IMR-90 (cell line): ENCODE measurements at regions of chr1 and their contacts with region 1.

Region 1: GRCh38 chr1:84620720-84621313 is 46.6 kb upstream of the CTBS start:
- DNase-seq: peak; percentile 57
- ATAC-seq: peak; percentile 93
- H3K4me3 ChIP-seq: peak overlapping the region; percentile 72
- H3K27ac ChIP-seq: peak overlapping the region; percentile 77
- H3K4me1 ChIP-seq: peaks cover 6% of the 10 kb centered on the region
- H3K27me3 ChIP-seq: no peaks in the 10 kb centered on the region
- CTCF ChIP-seq: peak; percentile 63
- POLR2A ChIP-seq: no peak
- RAD21 ChIP-seq: peak; percentile 49

Region 2: GRCh38 chr1:83905315-83905907 is 715.4 kb before region 1 on chr1:
- CTCF ChIA-PET with region 1: no interaction called
- POLR2A ChIA-PET with region 1: interaction called, 3 read pairs
- dilution Hi-C with region 1: no loop called
- in situ Hi-C with region 1: no loop called
- intact Hi-C with region 1: loop called (anchors 10 kb)
- DNase-seq: peak; percentile 22
- ATAC-seq: no peak
- H3K4me3 ChIP-seq: no peak overlapping the region
- H3K27ac ChIP-seq: no peak overlapping the region
- H3K4me1 ChIP-seq: peaks cover 2% of the 10 kb centered on the region; the same call in 1 of the 2 replicates
- H3K27me3 ChIP-seq: no peaks in the 10 kb centered on the region
- CTCF ChIP-seq: peak; percentile 60
- POLR2A ChIP-seq: no peak
- RAD21 ChIP-seq: peak; percentile 48; the same call in 1 of the 2 replicates

Region 3: GRCh38 chr1:84442256-84442655 is 178.6 kb before region 1 on chr1:
- CTCF ChIA-PET with region 1: interaction called, 3 read pairs
- POLR2A ChIA-PET with region 1: no interaction called
- dilution Hi-C with region 1: no loop called
- in situ Hi-C with region 1: no loop called
- intact Hi-C with region 1: loop called (anchors 1 kb)
- DNase-seq: peak; percentile 94
- ATAC-seq: peak; percentile 96
- H3K4me3 ChIP-seq: no peak overlapping the region
- H3K27ac ChIP-seq: no peak overlapping the region
- H3K4me1 ChIP-seq: 0 out of 2 replicates have a peak, but pooled peaks cover 2% of the 10 kb centered on the region
- H3K27me3 ChIP-seq: no peaks in the 10 kb centered on the region
- CTCF ChIP-seq: peak; percentile 82
- POLR2A ChIP-seq: no peak
- RAD21 ChIP-seq: peak; percentile 89

Region 4: GRCh38 chr1:84506002-84506728 is 114.7 kb before region 1 on chr1 and contains the starts of genes GNG5 and SPATA1:
- CTCF ChIA-PET with region 1: no interaction called
- POLR2A ChIA-PET with region 1: no interaction called
- dilution Hi-C with region 1: no loop called
- in situ Hi-C with region 1: no loop called
- intact Hi-C with region 1: loop called (anchors 1 kb)
- DNase-seq: peak; percentile 95
- ATAC-seq: peak; percentile 94
- H3K4me3 ChIP-seq: peak within 1 kb of the TSS; percentile 92
- H3K27ac ChIP-seq: peak within 1 kb of the TSS; percentile 95
- H3K4me1 ChIP-seq: peaks cover 6% of the 10 kb centered on the region; the same call in 1 of the 2 replicates
- H3K27me3 ChIP-seq: no peaks in the 10 kb centered on the region
- CTCF ChIP-seq: 0 out of 2 replicates have a peak, but pooled peaks have one; percentile 1
- POLR2A ChIP-seq: peak; percentile 95
- RAD21 ChIP-seq: peak; percentile 0; the same call in 1 of the 2 replicates
- total RNA-seq, gene GNG5: 30.8 and 36.4 TPM in 2 replicates
- total RNA-seq, gene SPATA1: under 0.01 and 0.56 TPM in 2 replicates

Region 5: DNA sequence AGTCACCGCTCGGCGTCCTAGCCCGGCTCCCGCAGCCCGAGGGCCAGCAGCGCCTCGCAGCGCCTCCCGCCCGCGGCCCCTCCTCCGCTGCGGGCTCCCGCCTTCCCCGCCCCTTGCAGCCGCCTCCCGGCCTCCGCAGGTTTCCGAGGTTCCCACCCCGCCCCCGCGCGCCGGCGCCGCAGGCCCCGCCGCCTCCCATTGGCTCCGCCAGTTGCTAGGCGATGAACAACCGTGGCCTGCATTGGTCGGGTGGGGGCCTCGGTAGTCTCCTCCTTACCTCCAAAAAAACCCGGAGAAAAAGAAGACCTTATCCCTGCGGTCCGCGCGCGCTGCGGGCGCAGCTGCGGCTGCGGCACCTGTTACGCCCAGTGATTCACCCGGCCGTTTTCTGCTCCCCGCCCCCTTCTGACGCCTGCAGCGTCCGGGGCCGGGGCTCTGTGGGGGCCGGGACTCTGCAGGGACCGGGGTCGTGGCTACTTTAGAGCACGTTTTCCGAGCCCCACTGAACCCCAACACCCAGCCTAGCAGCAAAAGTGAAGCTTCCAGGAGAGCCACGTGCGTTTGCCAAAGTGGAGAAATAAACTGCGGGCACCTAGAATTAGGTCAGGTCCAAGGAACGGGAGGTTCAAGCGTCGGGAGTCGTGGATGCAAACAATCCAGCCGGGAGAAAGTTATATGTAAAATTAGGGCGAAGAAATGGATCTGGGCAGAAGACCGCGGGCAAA is 69.7 kb after region 1 on chr1 and contains the start of gene SSX2IP:
- CTCF ChIA-PET with region 1: no interaction called
- POLR2A ChIA-PET with region 1: no interaction called
- dilution Hi-C with region 1: no loop called
- in situ Hi-C with region 1: no loop called
- intact Hi-C with region 1: loop called (anchors 5 kb)
- DNase-seq: peak; percentile 97
- ATAC-seq: peak; percentile 93
- H3K4me3 ChIP-seq: peak within 1 kb of the TSS; percentile 96
- H3K27ac ChIP-seq: peak within 1 kb of the TSS; percentile 80
- H3K4me1 ChIP-seq: peaks cover 4% of the 10 kb centered on the region
- H3K27me3 ChIP-seq: no peaks in the 10 kb centered on the region
- CTCF ChIP-seq: no peak
- POLR2A ChIP-seq: no peak
- RAD21 ChIP-seq: no peak
- total RNA-seq, gene SSX2IP: 13.4 and 22.8 TPM in 2 replicates

Region 6: DNA sequence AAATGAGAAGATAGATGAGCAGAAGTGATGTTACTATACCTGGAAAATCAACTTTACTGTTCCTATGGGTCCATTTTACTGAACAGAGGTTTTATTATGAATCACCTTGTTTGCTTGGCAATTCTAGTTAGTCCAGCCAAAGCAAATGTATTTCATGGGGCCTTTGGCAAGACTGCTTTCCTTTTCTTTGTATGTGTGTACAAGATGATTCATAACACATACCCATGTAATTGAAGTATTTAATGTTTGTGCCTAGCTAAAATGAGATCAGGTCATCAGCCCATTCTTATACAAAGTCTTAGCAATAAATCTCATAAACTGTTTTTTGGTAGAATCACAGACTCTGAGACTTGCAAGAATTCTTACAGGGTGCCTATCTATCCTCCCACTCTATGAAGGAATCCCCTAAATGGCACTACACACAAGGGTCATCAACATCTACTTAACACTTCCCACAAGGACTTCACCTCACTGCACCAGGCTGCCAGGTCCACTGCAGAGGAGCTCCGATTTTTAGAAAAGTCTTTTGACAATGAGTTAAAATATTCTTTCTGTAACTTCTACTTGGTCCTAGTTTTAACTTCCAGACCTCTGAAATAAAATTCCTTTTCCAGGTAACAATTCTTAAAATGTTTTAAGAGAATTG is 213.7 kb after region 1 on chr1:
- CTCF ChIA-PET with region 1: no interaction called
- POLR2A ChIA-PET with region 1: no interaction called
- dilution Hi-C with region 1: no loop called
- in situ Hi-C with region 1: no loop called
- intact Hi-C with region 1: no loop called
- DNase-seq: peak; percentile 72
- ATAC-seq: peak; percentile 66
- H3K4me3 ChIP-seq: no peak overlapping the region
- H3K27ac ChIP-seq: no peak overlapping the region
- H3K4me1 ChIP-seq: peaks cover 2% of the 10 kb centered on the region; the same call in 1 of the 2 replicates
- H3K27me3 ChIP-seq: peaks cover 11% of the 10 kb centered on the region
- CTCF ChIP-seq: no peak
- POLR2A ChIP-seq: no peak
- RAD21 ChIP-seq: no peak

Region 7: DNA sequence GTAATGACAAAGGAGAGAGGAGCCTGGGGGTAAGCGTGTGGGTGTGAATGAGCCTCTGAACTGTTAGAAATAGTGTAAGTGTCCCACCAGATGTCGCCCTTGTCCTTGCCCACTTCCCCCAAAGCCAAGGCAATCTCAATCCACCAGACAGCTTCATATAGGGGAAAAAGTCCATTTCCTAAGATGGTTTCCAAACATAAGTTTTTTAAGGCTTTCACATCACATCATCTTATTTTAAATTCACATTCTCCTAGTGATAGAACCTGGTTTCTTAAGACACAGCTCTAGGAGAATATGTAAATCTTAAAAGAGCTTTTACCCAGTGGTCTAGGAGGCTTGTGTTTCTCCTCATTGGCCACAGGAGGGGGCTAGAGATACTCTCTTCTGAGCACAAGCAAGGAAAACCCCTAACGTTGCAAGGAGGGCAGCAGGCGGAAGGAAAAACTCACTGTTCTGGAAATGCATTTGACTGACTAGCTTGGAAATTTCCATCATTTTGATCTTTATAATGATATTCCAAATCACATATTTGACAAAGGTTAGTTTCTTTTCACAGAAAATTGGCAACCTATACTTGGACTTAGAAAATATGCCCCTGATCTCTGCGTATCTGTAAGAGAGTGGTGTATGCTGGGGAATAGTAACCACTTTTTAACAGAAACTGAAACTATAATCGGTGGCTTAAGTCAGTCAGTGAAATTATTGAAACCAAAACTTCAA is 324.1 kb after region 1 on chr1:
- CTCF ChIA-PET with region 1: no interaction called
- POLR2A ChIA-PET with region 1: no interaction called
- dilution Hi-C with region 1: no loop called
- in situ Hi-C with region 1: loop called (anchors 25 kb)
- intact Hi-C with region 1: no loop called
- DNase-seq: peak; percentile 93
- ATAC-seq: peak; percentile 91
- H3K4me3 ChIP-seq: peak overlapping the region; percentile 1; the same call in 1 of the 2 replicates
- H3K27ac ChIP-seq: no peak overlapping the region
- H3K4me1 ChIP-seq: peaks cover 9% of the 10 kb centered on the region
- H3K27me3 ChIP-seq: peaks cover 2% of the 10 kb centered on the region; the same call in 1 of the 2 replicates
- CTCF ChIP-seq: peak; percentile 70
- POLR2A ChIP-seq: peak; percentile 51
- RAD21 ChIP-seq: peak; percentile 72